Ascending aorta (tissue), 2 donors: ENCODE measurements at regions of chr6 and their contacts with region 1.

Region 1: GRCh38 chr6:49958180-49958579 is 5.8 kb downstream of the DEFB114 start:
- DNase-seq: no peak
- H3K4me3 ChIP-seq: no peak overlapping the region
- H3K27ac ChIP-seq: no peak overlapping the region
- H3K4me1 ChIP-seq: no peaks in the 10 kb centered on the region
- H3K27me3 ChIP-seq: no peaks in the 10 kb centered on the region
- CTCF ChIP-seq: no peak

Region 2: GRCh38 chr6:49685455-49685854 is 272.7 kb before region 1 on chr6:
- intact Hi-C with region 1: no loop called
- DNase-seq: no peak
- H3K4me3 ChIP-seq: no peak overlapping the region
- H3K27ac ChIP-seq: no peak overlapping the region
- H3K4me1 ChIP-seq: no peaks in the 10 kb centered on the region
- H3K27me3 ChIP-seq: no peaks in the 10 kb centered on the region
- CTCF ChIP-seq: no peak

Region 3: DNA sequence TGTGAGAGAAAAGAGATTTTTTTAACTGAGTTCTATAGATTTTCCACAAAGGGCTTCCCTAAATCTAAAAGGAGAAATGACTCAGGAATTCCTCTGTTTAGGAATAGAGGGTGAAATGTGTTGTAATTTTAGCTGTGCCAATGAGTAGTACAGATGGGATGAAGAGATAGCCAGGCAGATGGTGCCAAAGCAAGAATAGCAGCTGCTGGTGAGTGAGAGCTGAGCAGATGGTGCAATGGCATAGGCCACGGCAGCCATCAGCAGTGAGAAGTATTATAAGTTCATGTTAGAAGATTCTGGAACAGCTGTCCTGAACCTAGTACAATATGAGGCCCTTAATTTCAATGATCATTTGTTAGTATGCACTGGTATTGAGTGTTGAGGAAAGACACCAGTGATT is 51.7 kb before region 1 on chr6:
- intact Hi-C with region 1: loop called (anchors 2 kb)
- DNase-seq: no peak
- H3K4me3 ChIP-seq: no peak overlapping the region
- H3K27ac ChIP-seq: no peak overlapping the region
- H3K4me1 ChIP-seq: no peaks in the 10 kb centered on the region
- H3K27me3 ChIP-seq: no peaks in the 10 kb centered on the region
- CTCF ChIP-seq: no peak